ENCODE measurements at regions of chr1 and their contacts with region 1.

Region 1: GRCh38 chr1:109112652-109113285 is 1.1 kb upstream of the ELAPOR1 start:
- DNase-seq: peak; percentile 95
- ATAC-seq: peak; percentile 62
- H3K4me3 Mint-ChIP-seq: peak overlapping the region; percentile 71
- H3K27ac Mint-ChIP-seq: peak overlapping the region; percentile 65
- H3K4me1 Mint-ChIP-seq: peaks cover 41% of the 10 kb centered on the region
- H3K27me3 Mint-ChIP-seq: no peaks in the 10 kb centered on the region

Region 2: DNA sequence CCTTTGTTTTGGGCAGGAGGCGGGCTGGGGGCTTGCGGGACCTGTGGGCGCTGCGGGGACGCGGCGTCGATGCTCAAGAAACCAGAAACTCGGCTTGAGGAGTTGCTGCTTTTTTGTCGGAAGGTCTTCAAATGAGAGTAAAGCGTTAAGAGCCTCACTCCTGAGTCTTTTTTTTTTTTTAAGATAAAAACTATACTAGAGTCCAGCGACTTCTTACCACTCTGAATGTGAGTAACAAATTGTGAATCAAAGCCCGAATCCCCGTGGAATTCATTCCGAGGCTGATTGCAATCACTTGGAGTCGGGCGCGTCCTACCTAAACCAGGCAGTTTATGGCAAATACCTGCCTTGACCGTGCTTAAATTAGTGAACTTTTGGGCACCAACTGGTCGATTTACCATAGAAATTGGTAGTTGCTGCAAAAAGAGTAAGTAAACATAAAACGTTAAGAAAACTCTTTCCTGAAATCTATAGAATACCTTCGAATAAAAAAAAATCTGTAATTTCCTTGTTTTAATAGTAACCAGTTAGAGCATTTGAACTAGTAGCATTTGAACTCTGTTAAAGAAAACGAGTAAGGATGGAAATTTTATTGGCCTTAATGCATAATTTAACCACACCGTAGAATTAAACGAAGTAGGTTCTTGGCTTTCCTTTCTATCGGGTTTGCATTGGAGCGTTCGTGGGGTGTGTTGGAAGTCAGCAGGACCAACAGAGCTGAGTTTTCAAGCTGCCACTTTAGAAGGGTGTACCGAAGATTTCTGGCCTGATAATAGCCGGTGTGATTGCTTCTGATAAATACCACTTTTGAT is 235.2 kb before region 1 on chr1:
- CTCF ChIA-PET with region 1: no interaction called
- POLR2A ChIA-PET with region 1: no interaction called
- intact Hi-C with region 1: loop called in 1 of 2 experiments (anchors 2 kb)
- DNase-seq: no peak
- ATAC-seq: peak; percentile 2
- H3K4me3 Mint-ChIP-seq: peak overlapping the region; percentile 91
- H3K27ac Mint-ChIP-seq: peak overlapping the region; percentile 78
- H3K4me1 Mint-ChIP-seq: peaks cover 5% of the 10 kb centered on the region
- H3K27me3 Mint-ChIP-seq: peaks cover 5% of the 10 kb centered on the region

Region 3: DNA sequence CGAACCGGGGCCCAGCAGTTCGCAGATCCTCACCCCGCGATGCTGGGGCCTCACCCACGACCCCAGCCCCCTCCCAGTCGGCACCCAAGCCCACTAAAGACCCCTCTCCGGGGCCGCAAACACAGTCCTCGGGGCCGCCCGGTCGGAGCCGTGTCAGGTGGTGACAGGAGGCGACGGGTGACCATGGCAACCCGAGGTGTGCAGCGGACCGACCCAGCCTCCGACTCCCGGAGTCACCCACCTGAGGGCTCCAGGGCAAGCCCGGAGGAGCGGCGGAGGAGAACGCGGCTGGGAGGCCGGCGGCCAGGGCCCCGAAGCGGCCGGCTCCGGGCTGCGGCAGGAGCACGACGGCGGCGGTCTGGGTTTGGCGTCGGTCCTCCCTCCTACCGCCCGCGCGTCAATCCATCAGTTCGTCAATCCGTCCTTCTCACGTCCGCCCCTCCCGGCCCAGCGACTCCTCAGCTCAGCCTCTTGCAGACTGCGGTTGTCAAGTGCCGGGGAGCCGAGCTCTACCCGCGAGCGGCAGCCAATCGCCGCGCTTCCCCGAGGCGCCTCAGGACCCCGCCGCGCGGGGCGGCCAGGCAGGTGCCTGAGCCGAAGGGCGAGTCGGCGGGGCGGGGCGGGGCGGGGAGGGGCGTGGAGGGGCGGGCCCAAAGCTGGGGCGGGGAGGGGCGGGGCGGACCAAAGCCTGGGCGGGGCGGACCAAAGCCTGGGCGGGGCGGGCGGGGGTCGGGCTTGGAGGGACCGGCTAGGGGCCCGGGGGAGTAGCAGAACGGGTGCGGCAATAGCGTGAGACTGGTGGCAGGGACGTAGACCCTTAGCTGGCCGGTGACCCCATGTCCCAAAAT is 70.9 kb before region 1 on chr1 and contains the start of gene WDR47:
- CTCF ChIA-PET with region 1: interaction called, 4 read pairs
- POLR2A ChIA-PET with region 1: no interaction called
- intact Hi-C with region 1: loop called in 1 of 2 experiments (anchors 1 kb)
- DNase-seq: peak; percentile 98
- ATAC-seq: peak; percentile 99
- H3K4me3 Mint-ChIP-seq: peak within 1 kb of the TSS; percentile 82
- H3K27ac Mint-ChIP-seq: peak within 1 kb of the TSS; percentile 65
- H3K4me1 Mint-ChIP-seq: peaks cover 16% of the 10 kb centered on the region
- H3K27me3 Mint-ChIP-seq: no peaks in the 10 kb centered on the region
- total RNA-seq, gene WDR47: 6.9 to 7.6 TPM

Region 4: GRCh38 chr1:109090196-109091077 is 22.3 kb before region 1 on chr1 and contains the start of gene TMEM167B:
- CTCF ChIA-PET with region 1: interaction called, 15 read pairs
- POLR2A ChIA-PET with region 1: no interaction called
- intact Hi-C with region 1: loop called (anchors 1 to 2 kb)
- DNase-seq: peak; percentile 95
- ATAC-seq: peak; percentile 88
- H3K4me3 Mint-ChIP-seq: peak within 1 kb of the TSS; percentile 85
- H3K27ac Mint-ChIP-seq: peak within 1 kb of the TSS; percentile 84
- H3K4me1 Mint-ChIP-seq: peaks cover 30% of the 10 kb centered on the region
- H3K27me3 Mint-ChIP-seq: no peaks in the 10 kb centered on the region
- total RNA-seq, gene TMEM167B: 26.8 to 28.4 TPM

Region 5: DNA sequence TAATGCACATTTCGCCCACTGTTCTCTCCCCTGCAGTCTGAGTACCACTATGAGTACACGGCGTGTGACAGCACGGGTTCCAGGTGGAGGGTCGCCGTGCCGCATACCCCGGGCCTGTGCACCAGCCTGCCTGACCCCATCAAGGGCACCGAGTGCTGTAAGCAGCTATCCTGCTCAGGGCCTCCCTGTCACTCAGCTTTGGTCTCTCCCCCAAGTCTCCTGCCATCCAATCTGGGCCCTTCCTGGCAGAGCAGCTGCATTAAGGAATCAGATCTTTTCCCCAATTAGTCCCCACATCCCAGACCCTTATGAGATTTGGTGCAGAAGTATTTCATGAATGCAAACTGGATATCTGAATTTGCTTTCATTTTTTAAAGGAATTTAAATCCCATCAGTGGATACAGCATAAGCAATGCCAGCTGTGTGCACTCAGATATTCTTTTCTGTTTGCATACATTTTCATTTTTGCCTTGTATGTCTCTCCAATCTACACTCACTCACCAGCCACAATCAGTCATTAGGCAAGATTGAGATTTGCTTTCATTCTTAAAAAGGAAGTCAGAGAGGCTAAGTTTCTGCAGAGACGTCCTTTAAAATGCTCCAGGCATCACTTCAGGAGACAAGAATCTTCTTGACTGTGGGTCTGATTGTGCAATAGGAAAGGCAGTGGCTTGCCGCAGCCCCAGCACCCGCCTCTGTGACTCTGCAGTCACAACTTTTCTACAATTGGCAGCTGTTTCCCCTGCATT is 49.3 kb after region 1 on chr1:
- CTCF ChIA-PET with region 1: interaction called, 5 read pairs
- POLR2A ChIA-PET with region 1: no interaction called
- intact Hi-C with region 1: loop called (anchors 2 to 5 kb)
- DNase-seq: peak; percentile 69
- ATAC-seq: peak; percentile 95
- H3K4me3 Mint-ChIP-seq: no peak overlapping the region
- H3K27ac Mint-ChIP-seq: peak overlapping the region; percentile 34
- H3K4me1 Mint-ChIP-seq: peaks cover 23% of the 10 kb centered on the region
- H3K27me3 Mint-ChIP-seq: no peaks in the 10 kb centered on the region

Measured in activated CD4-positive, alpha-beta T cell treated with anti-CD3 and anti-CD28 coated beads for 36 hours (primary cell).